CD4-positive, alpha-beta memory T cell (primary cell): ENCODE measurements at regions of chr2 and their contacts with region 1.

Region 1: GRCh38 chr2:33620-34019 is 12.7 kb downstream of the FAM110C start:
- DNase-seq: peak in 3 of 5 donors; percentile 34 to 77 (median 35)
- H3K4me3 ChIP-seq: peak overlapping the region in 1 of 2 donors; percentile 27
- H3K4me3 Mint-ChIP-seq: peak overlapping the region; percentile 9 to 81 (median 68)
- H3K27ac ChIP-seq: no peak overlapping the region
- H3K27ac Mint-ChIP-seq: peak overlapping the region in 6 of 7 donors; percentile 59 to 81 (median 71)
- H3K4me1 ChIP-seq: peaks cover 52% of the 10 kb centered on the region
- H3K4me1 Mint-ChIP-seq: peaks cover 28 to 57% (median 36%) of the 10 kb centered on the region in 4 donors
- H3K27me3 ChIP-seq: no peaks in the 10 kb centered on the region
- H3K27me3 Mint-ChIP-seq: no peaks in the 10 kb centered on the region

Region 2: GRCh38 chr2:46471-47345 is 13.1 kb after region 1 on chr2 and contains the start of gene FAM110C:
- CTCF ChIA-PET with region 1: no interaction called
- POLR2A ChIA-PET with region 1: interaction called, 14 read pairs
- intact Hi-C with region 1: no loop called
- DNase-seq: peak; percentile 31 to 55 (median 43)
- H3K4me3 ChIP-seq: peak within 1 kb of the TSS in 1 of 2 donors; percentile 62
- H3K4me3 Mint-ChIP-seq: peak within 1 kb of the TSS; percentile 83 to 92 (median 88)
- H3K27ac ChIP-seq: no peak within 1 kb of the TSS
- H3K27ac Mint-ChIP-seq: peak within 1 kb of the TSS; percentile 4 to 88 (median 57)
- H3K4me1 ChIP-seq: peaks cover 24% of the 10 kb centered on the region
- H3K4me1 Mint-ChIP-seq: peaks cover 5 to 21% (median 16%) of the 10 kb centered on the region in 4 donors
- H3K27me3 ChIP-seq: peaks cover 5% of the 10 kb centered on the region
- H3K27me3 Mint-ChIP-seq: peaks cover 5 to 7% of the 10 kb centered on the region in 2 donors
- total RNA-seq, gene FAM110C: 2.1 to 2.5 TPM

Region 3: DNA sequence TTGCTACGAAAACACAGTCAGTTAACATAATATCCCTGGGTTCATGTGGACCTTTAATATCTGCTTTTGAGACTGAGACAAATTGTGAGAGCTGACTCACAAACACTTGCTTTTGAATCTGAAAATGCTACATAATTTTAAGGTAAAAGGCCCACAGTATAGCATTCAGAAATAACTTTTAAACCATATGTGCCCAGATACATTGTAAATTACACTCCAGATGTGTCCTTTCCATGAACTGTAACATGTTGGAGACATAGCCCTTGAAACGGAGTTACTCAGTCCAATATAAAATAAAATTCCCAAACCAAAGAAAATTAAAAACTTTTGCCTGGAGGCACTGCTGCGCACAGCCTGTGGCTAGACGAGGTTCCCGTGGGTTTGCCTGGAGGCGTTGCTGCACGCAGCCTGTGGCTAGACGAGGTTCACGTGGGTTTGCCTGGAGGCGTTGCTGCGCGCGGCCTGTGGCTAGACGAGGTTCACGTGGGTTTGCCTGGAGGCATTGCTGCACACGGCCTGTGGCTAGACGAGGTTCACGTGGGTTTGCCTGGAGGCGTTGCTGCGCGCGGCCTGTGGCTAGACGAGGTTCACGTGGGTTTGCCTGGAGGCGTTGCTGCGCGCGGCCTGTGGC is 386.2 kb after region 1 on chr2:
- CTCF ChIA-PET with region 1: no interaction called
- POLR2A ChIA-PET with region 1: no interaction called
- intact Hi-C with region 1: no loop called
- DNase-seq: peak in 4 of 5 donors; percentile 19 to 46 (median 24)
- H3K4me3 ChIP-seq: no peak overlapping the region
- H3K4me3 Mint-ChIP-seq: peak overlapping the region in 1 of 8 donors; percentile 20
- H3K27ac ChIP-seq: no peak overlapping the region
- H3K27ac Mint-ChIP-seq: no peak overlapping the region
- H3K4me1 ChIP-seq: no peaks in the 10 kb centered on the region
- H3K4me1 Mint-ChIP-seq: peaks cover 3 to 12% (median 7%) of the 10 kb centered on the region in 4 donors
- H3K27me3 ChIP-seq: peaks cover 3% of the 10 kb centered on the region
- H3K27me3 Mint-ChIP-seq: peaks cover 6 to 9% of the 10 kb centered on the region in 2 donors

Region 4: GRCh38 chr2:953975-954686 is 920.5 kb after region 1 on chr2:
- CTCF ChIA-PET with region 1: no interaction called
- POLR2A ChIA-PET with region 1: no interaction called
- intact Hi-C with region 1: no loop called
- DNase-seq: no peak
- H3K4me3 ChIP-seq: no peak overlapping the region
- H3K4me3 Mint-ChIP-seq: no peak overlapping the region
- H3K27ac ChIP-seq: no peak overlapping the region
- H3K27ac Mint-ChIP-seq: peak overlapping the region in 1 of 7 donors; percentile 61
- H3K4me1 ChIP-seq: peaks cover 8% of the 10 kb centered on the region
- H3K4me1 Mint-ChIP-seq: peaks cover 7 to 21% (median 10%) of the 10 kb centered on the region in 4 donors
- H3K27me3 ChIP-seq: peaks cover 6% of the 10 kb centered on the region
- H3K27me3 Mint-ChIP-seq: peaks cover 7 to 24% of the 10 kb centered on the region in 2 donors